ENCODE measurements at regions of chr3 and their contacts with region 1.

Region 1: DNA sequence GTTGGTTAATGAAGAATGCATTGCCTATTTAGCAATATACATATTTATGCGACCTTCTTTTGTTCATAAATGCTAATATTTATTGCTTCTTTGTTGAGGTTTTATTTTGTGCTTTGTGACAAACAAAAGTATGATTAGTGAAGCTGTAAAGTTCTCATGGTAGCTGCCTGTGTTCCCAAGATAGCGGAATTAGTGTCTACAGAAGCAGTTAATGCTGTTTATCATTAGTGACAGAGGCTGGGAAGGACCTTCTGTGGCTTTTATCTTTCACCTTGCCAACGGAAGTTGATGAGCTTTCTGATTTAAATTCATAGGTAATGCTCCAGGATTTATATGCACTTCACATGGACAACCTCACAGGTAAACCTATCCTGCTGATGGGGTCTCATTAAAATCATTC is 418.3 kb downstream of the CADM2 start:
- DNase-seq: no peak
- ATAC-seq: no peak

Region 2: DNA sequence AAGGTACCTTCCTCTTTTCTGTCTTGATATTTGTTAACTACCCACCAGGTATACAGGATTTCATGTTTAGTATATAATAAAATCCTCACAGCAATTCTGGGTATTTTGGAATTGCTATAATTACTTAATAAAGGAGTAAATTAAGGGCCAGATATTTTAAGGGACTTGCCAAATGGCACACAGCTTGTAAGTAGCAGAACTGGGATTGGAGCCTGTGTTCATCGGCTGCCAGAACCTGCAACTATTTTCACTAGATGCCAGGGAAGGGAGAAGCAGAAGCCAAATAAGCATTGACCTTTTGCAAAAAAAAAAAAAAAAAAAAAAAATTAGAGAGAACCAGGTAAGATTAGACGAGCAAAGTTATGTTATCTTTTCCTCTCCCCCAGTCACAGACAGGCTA is 1101.6 kb before region 1 on chr3:
- intact Hi-C with region 1: loop called (anchors 5 kb)
- DNase-seq: no peak
- ATAC-seq: no peak

Region 3: GRCh38 chr3:85005946-85006345 is 371.2 kb before region 1 on chr3:
- intact Hi-C with region 1: no loop called
- DNase-seq: no peak
- ATAC-seq: no peak

Measured in sciatic nerve (tissue), 2 donors.